ENCODE measurements at regions of chr1 and their contacts with region 1.

Region 1: GRCh38 chr1:92858564-92859399 is 26.9 kb downstream of the RPL5 start:
- DNase-seq: peak; percentile 74
- H3K4me3 Mint-ChIP-seq: peak overlapping the region; percentile 63
- H3K27ac Mint-ChIP-seq: peak overlapping the region; percentile 60
- H3K4me1 Mint-ChIP-seq: peaks cover 19% of the 10 kb centered on the region
- H3K27me3 Mint-ChIP-seq: no peaks in the 10 kb centered on the region

Region 2: GRCh38 chr1:92749024-92749634 is 109.7 kb before region 1 on chr1:
- CTCF ChIA-PET with region 1: no interaction called
- intact Hi-C with region 1: no loop called
- DNase-seq: peak; percentile 60
- H3K4me3 Mint-ChIP-seq: no peak overlapping the region
- H3K27ac Mint-ChIP-seq: no peak overlapping the region
- H3K4me1 Mint-ChIP-seq: no peaks in the 10 kb centered on the region
- H3K27me3 Mint-ChIP-seq: no peaks in the 10 kb centered on the region

Region 3: GRCh38 chr1:92870591-92870990 is 11.8 kb after region 1 on chr1:
- CTCF ChIA-PET with region 1: interaction called, 22 read pairs
- intact Hi-C with region 1: no loop called
- DNase-seq: no peak
- H3K4me3 Mint-ChIP-seq: no peak overlapping the region
- H3K27ac Mint-ChIP-seq: no peak overlapping the region
- H3K4me1 Mint-ChIP-seq: peaks cover 13% of the 10 kb centered on the region
- H3K27me3 Mint-ChIP-seq: no peaks in the 10 kb centered on the region

Region 4: GRCh38 chr1:92951141-92951582 is 92.4 kb after region 1 on chr1:
- CTCF ChIA-PET with region 1: interaction called, 18 read pairs
- intact Hi-C with region 1: loop called (anchors 1 kb)
- DNase-seq: peak; percentile 48
- H3K4me3 Mint-ChIP-seq: no peak overlapping the region
- H3K27ac Mint-ChIP-seq: no peak overlapping the region
- H3K4me1 Mint-ChIP-seq: peaks cover 41% of the 10 kb centered on the region
- H3K27me3 Mint-ChIP-seq: no peaks in the 10 kb centered on the region

Region 5: GRCh38 chr1:92975551-92976232 is 116.9 kb after region 1 on chr1:
- CTCF ChIA-PET with region 1: interaction called, 40 read pairs
- intact Hi-C with region 1: no loop called
- DNase-seq: no peak
- H3K4me3 Mint-ChIP-seq: no peak overlapping the region
- H3K27ac Mint-ChIP-seq: peak overlapping the region; percentile 38
- H3K4me1 Mint-ChIP-seq: peaks cover 62% of the 10 kb centered on the region
- H3K27me3 Mint-ChIP-seq: no peaks in the 10 kb centered on the region

Region 6: GRCh38 chr1:93021539-93022134 is 162.9 kb after region 1 on chr1:
- CTCF ChIA-PET with region 1: interaction called, 5 read pairs
- intact Hi-C with region 1: loop called (anchors 1 kb)
- DNase-seq: no peak
- H3K4me3 Mint-ChIP-seq: no peak overlapping the region
- H3K27ac Mint-ChIP-seq: no peak overlapping the region
- H3K4me1 Mint-ChIP-seq: no peaks in the 10 kb centered on the region
- H3K27me3 Mint-ChIP-seq: peaks cover 1% of the 10 kb centered on the region